Activated naive CD4-positive, alpha-beta T cell treated with anti-CD3 and anti-CD28 coated beads for 36 hours (primary cell): ENCODE measurements at regions of chr6 and their contacts with region 1.

Region 1: DNA sequence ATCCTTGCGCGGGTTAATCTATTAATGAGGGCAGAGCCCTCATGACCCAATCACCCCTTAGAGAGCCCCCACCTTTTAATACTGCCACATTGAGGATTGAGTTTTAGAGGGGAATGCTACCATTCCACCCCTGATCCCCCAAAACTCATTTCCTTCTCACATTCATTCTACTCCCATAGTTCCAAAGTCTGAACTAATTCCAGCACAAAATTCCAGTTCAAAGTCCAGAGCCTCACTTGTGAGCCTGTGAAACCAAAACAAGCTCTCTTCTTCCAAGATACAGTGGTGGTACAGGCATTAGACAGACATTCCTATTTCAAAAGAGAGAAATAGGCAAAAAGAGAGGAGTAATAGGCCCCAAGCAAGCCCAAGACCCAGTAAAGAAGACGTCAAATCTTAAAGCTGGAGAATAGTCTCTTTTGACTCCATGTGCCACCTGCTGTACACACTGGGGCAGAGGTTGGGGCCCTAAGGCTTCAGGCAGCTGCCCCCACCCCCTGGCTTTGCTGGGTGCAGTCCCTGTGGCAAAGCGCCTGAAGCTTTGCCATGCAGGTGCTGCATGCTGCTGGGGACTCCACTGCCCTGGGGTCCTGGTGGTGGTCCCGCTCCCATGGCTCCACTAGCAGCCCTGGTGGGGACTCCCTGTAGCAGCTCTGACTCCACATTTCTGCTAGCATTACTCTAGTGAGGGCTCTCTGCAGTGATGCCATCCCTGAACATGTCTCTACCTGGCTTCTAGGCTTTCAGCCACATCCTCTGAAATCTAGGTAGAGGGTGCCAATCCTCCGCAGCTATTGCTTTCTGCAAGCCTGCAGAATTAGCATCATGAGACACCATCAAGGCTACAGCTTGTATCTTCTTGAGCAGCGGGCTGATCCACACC is 41.3 kb downstream of the RSPH3 start:
- DNase-seq: peak; percentile 45
- H3K4me3 Mint-ChIP-seq: no peak overlapping the region
- H3K27ac Mint-ChIP-seq: no peak overlapping the region
- H3K4me1 Mint-ChIP-seq: no peaks in the 10 kb centered on the region
- H3K27me3 Mint-ChIP-seq: no peaks in the 10 kb centered on the region

Region 2: GRCh38 chr6:158674342-158675131 is 284.2 kb before region 1 on chr6:
- CTCF ChIA-PET with region 1: no interaction called
- intact Hi-C with region 1: no loop called
- DNase-seq: no peak
- H3K4me3 Mint-ChIP-seq: no peak overlapping the region
- H3K27ac Mint-ChIP-seq: no peak overlapping the region
- H3K4me1 Mint-ChIP-seq: peaks cover 9% of the 10 kb centered on the region
- H3K27me3 Mint-ChIP-seq: no peaks in the 10 kb centered on the region

Region 3: GRCh38 chr6:158686791-158687381 is 271.9 kb before region 1 on chr6:
- CTCF ChIA-PET with region 1: no interaction called
- intact Hi-C with region 1: no loop called
- DNase-seq: peak; percentile 58
- H3K4me3 Mint-ChIP-seq: no peak overlapping the region
- H3K27ac Mint-ChIP-seq: peak overlapping the region; percentile 81
- H3K4me1 Mint-ChIP-seq: peaks cover 70% of the 10 kb centered on the region
- H3K27me3 Mint-ChIP-seq: no peaks in the 10 kb centered on the region

Region 4: DNA sequence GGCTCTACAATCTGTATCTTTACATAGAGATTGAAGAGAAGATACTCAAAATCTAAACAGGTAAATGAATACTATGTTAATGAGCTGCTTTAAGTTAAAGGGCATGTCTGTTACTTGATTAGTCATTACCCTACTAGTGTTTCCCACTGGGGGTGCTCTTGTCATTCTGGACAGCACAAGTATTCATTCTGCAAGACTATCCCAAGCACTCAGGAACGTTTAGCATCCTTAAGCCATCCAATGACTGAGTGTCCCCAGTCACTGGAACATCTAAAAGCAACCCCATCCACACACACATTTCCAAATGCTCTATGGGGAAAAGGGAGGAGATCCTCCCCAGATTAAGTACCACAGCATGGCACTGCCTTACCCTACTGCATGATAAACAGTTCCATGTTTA is 165.3 kb before region 1 on chr6:
- CTCF ChIA-PET with region 1: interaction called, 5 read pairs
- intact Hi-C with region 1: loop called (anchors 1 kb)
- DNase-seq: peak; percentile 43
- H3K4me3 Mint-ChIP-seq: no peak overlapping the region
- H3K27ac Mint-ChIP-seq: peak overlapping the region; percentile 24
- H3K4me1 Mint-ChIP-seq: peaks cover 88% of the 10 kb centered on the region
- H3K27me3 Mint-ChIP-seq: no peaks in the 10 kb centered on the region

Region 5: DNA sequence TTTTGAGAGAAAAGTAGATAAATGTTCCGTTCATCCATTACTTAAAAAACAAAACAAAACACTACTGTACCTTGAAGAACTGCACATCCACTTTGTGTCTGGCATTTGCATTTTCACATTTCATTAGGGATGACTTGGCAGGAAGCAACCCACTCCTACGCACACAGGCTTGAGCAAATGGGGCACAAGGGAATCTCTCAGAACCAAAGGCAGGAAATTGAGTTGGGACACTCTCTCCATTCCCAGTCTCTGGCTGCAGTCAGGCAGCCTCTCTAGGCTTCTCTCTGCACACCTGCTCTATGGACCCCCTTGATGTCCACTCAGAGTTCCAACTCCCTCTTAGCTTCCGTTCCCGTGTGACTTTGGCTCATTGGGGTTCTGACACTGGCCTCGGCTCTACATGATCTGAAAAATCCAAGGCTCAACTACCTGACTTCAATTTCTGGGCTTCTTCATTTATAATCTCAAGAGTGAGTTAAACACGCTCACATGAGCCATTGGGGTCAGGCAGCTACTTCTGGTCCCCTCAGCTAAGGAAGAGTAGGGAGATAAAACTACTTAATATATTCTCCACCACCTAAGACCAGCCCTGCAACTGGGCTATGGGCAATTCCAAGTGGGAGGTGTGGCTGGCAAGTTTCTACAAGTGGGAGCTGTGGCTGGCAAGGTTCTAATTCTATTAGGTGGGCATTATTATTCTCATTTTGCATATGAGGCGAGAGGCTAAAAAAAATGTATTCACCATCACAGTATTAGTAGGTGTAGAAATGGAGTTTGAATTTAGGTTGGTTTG is 482.4 kb after region 1 on chr6:
- CTCF ChIA-PET with region 1: no interaction called
- intact Hi-C with region 1: no loop called
- DNase-seq: no peak
- H3K4me3 Mint-ChIP-seq: no peak overlapping the region
- H3K27ac Mint-ChIP-seq: no peak overlapping the region
- H3K4me1 Mint-ChIP-seq: no peaks in the 10 kb centered on the region
- H3K27me3 Mint-ChIP-seq: peaks cover 2% of the 10 kb centered on the region